Activated CD8-positive, alpha-beta T cell treated with anti-CD3 and anti-CD28 coated beads, Interleukin-2, amount 10 ng/mL, durations not matched to agents 7 days and 5 days (primary cell): ENCODE measurements at regions of chr1 and their contacts with region 1.

Region 1: DNA sequence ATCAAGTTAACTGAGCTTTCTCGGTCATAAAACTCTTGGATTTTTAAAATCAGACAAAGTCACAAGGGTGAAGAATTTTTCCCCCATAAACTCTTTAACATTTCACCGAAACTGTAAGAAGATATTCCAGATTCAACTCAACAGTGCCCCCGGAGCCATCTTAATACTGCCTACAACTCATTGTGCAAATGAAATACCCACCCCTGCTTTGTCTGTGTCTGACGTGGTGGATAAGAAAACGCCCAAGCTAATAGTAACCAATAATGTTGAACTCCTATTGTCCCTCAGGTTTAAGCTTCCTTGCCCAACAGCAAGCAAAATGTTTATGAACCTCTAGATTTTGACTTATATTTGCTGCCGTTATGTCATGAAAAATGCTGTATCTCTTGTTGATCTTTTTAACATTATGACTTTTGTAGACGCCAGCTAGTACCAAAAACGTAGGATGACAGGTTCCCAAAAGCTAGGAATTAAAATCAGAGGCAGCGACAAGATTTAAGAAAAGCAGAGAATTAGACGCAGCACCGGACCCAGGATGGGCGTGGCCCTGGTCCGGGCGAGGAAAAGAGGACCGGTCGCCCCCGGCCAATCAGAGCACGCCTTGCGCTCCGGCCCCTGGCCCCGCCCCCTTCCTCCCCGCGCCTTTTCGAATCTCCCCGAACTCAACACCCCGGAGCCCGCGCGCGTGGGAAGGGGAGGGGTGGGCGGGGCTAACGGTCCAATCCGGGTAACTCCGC is 1.1 kb downstream of the STMN1 start:
- DNase-seq: peak; percentile 99
- ATAC-seq: peak; percentile 85
- H3K4me3 Mint-ChIP-seq: peak overlapping the region; percentile 93
- H3K27ac Mint-ChIP-seq: peak overlapping the region; percentile 96
- H3K4me1 Mint-ChIP-seq: peaks cover 46% of the 10 kb centered on the region
- H3K27me3 Mint-ChIP-seq: peaks cover 21% of the 10 kb centered on the region

Region 2: DNA sequence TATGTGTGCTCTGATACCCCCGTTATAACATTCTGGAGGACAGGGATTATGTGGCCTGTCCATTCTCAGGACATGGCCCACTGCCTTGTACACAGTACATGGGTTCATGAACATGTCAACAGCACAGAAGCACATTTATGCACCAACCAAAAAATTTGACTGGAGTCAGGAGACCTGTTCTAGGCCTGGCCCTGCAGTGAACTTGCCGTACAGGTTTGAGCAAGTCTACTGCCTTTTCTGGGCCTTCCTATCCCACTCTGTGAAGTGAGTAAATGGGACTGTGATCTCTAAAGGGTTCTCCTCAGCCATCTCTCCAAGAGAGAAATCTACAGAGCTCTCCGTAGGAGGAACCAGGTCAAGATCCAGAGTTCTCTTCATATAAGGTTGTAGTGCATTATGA is 23.4 kb after region 1 on chr1:
- CTCF ChIA-PET with region 1: no interaction called
- POLR2A ChIA-PET with region 1: no interaction called
- DNase-seq: no peak
- ATAC-seq: no peak
- H3K4me3 Mint-ChIP-seq: no peak overlapping the region
- H3K27ac Mint-ChIP-seq: no peak overlapping the region
- H3K4me1 Mint-ChIP-seq: peaks cover 5% of the 10 kb centered on the region
- H3K27me3 Mint-ChIP-seq: peaks cover 28% of the 10 kb centered on the region

Region 3: DNA sequence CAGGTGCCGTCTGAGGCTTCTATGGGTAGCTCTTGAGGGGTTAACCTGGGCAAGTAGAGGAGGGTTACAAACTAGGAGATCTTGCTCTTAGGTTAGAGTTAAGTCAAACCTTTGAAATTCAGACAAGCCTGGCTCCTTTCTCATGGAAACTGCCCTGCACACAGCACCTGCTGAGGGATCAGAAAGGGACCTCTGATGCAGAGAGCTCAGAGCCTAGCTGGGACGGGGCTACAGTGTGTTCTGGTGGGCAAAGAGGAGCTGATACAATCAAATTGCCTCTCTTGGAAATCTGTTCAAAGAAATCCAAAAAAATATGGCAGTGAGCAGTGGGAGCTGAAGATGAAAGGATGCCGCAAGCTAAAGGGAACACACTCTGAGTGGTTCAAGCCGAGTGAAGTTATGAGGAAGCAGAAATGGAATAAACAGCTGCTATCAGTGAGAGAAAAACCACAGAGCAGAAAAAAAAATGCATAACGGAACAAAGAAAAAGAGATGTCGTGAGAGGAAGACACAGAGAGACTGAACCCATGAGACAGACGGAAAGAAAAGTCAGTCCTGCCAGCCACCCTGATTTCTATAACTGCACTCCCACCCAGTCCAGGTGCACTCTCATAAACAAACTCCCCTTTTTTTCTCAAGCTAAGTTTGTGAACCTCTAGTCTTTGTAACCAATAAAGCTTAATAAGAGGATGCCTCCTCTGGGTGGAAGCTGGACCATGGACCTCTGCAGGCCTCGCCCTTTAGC is 66.1 kb after region 1 on chr1:
- CTCF ChIA-PET with region 1: interaction called, 6 read pairs
- POLR2A ChIA-PET with region 1: interaction called, 11 read pairs
- DNase-seq: peak; percentile 26
- ATAC-seq: peak; percentile 82
- H3K4me3 Mint-ChIP-seq: peak overlapping the region; percentile 16
- H3K27ac Mint-ChIP-seq: peak overlapping the region; percentile 80
- H3K4me1 Mint-ChIP-seq: peaks cover 19% of the 10 kb centered on the region
- H3K27me3 Mint-ChIP-seq: no peaks in the 10 kb centered on the region

Region 4: GRCh38 chr1:25990702-25991395 is 85.7 kb after region 1 on chr1:
- CTCF ChIA-PET with region 1: interaction called, 610 read pairs
- POLR2A ChIA-PET with region 1: interaction called, 23 read pairs
- DNase-seq: peak; percentile 68
- ATAC-seq: peak; percentile 92
- H3K4me3 Mint-ChIP-seq: peak overlapping the region; percentile 85
- H3K27ac Mint-ChIP-seq: peak overlapping the region; percentile 86
- H3K4me1 Mint-ChIP-seq: peaks cover 47% of the 10 kb centered on the region
- H3K27me3 Mint-ChIP-seq: no peaks in the 10 kb centered on the region